ENCODE measurements at regions of chr1 and their contacts with region 1.

Region 1: GRCh38 chr1:25895365-25895993 is 10.7 kb downstream of the STMN1 start:
- DNase-seq: peak; percentile 92
- ATAC-seq: peak; percentile 89 to 97

Region 2: DNA sequence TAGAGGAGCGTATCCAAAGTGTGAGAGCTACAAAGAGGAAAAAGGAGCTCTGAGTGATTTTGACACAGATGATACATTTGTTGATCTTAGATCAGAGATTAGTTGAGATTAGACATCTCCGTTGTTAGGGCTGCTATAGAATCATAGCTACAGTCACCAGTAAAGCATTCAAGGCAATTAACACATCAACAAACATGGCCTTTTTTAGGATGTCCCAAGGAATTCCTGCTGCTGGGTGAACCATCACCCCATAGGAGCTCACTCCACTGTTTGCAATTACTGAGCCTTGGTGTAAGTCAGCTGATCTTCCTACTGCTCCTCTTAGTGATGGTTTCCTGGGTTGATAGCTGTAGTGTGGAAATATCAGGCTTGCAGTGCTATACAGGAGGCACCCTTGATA is 641.6 kb before region 1 on chr1:
- intact Hi-C with region 1: no loop called
- DNase-seq: no peak
- ATAC-seq: no peak

Region 3: GRCh38 chr1:25997828-25998761 is 102.6 kb after region 1 on chr1 and contains the start of gene PAFAH2:
- intact Hi-C with region 1: loop called (anchors 1 to 5 kb)
- DNase-seq: peak; percentile 98
- ATAC-seq: peak; percentile 99 to 100
- total RNA-seq, gene PAFAH2: 5.5 to 6.8 TPM

Region 4: DNA sequence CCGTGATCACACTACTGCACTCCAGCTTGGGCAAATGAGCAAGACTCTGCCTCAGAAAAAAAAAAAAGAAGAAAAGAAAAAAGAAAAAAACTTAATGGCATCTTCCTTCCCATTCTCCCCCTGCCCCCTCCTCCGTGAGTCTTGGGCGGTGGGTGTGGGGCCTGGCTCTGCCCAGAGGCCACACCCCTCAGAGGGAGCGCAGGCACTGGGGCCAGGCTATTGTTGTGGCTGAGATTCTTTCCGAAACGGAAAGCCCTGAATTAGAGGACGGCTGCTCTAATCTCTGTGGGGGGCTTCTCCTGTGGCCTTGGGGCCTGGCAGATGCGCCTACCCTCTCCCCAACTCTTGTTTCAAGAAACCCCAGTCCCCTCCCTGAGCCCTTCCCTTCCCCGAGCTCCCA is 259.3 kb after region 1 on chr1:
- intact Hi-C with region 1: loop called in 1 of 2 experiments (anchors 5 kb)
- DNase-seq: no peak
- ATAC-seq: peak in 1 of 2 donors; percentile 28

Region 5: GRCh38 chr1:26169669-26170471 is 274.4 kb after region 1 on chr1 and contains the start of gene ZNF593:
- intact Hi-C with region 1: loop called in 1 of 2 experiments (anchors 10 kb)
- DNase-seq: peak; percentile 95
- ATAC-seq: peak; percentile 98 to 99
- total RNA-seq, gene ZNF593: 13.4 to 24.3 TPM

Measured in left cardiac atrium (tissue), 4 donors.